Calu3 (cell line): ENCODE measurements at regions of chr6 and their contacts with region 1.

Region 1: DNA sequence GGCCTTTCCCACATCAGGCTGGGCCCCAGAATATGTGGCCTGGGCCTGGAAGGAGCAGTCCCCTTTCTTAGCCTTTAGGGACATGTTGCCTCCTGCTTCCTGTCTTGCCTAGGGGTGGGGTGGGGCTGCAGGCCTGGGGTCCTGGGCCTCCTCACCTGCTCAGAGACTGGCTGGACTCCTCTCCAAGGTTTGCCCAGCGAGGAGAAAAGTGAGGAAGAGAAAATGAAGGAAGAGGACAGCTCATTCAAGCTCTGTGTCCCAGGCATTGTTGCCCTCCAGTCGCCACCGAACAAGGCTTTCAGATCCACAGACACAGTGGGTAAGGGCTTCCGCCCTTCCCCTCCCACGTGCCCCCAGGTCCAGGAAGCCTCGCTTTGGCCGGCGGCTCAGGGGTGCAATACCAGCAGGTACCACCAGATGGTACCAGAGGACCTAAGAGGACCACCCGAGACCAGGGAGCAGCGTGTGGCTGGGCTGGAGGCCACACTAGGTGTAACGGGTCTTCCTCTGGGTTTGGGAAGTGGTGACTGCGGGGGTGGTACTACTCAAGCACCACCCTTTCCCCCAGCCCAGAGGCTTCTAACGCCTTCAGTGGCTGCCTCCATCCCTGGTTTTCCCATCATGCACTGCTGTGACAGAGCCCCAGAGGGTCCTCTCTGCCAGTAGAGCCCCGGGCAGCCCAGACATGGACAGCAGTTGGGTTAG is 5.5 kb upstream of the BAK1 start:
- DNase-seq: peak; percentile 95
- H3K4me3 Mint-ChIP-seq: no peak overlapping the region
- H3K27ac Mint-ChIP-seq: no peak overlapping the region
- H3K4me1 Mint-ChIP-seq: peaks cover 24% of the 10 kb centered on the region
- H3K27me3 Mint-ChIP-seq: no peaks in the 10 kb centered on the region
- CTCF ChIP-seq: peak; percentile 99

Region 2: GRCh38 chr6:33607784-33608161 is 22.2 kb after region 1 on chr6:
- CTCF ChIA-PET with region 1: interaction called, 14 read pairs
- intact Hi-C with region 1: no loop called
- DNase-seq: peak; percentile 71
- H3K4me3 Mint-ChIP-seq: no peak overlapping the region
- H3K27ac Mint-ChIP-seq: no peak overlapping the region
- H3K4me1 Mint-ChIP-seq: peaks cover 56% of the 10 kb centered on the region
- H3K27me3 Mint-ChIP-seq: no peaks in the 10 kb centered on the region
- CTCF ChIP-seq: peak; percentile 67

Region 3: DNA sequence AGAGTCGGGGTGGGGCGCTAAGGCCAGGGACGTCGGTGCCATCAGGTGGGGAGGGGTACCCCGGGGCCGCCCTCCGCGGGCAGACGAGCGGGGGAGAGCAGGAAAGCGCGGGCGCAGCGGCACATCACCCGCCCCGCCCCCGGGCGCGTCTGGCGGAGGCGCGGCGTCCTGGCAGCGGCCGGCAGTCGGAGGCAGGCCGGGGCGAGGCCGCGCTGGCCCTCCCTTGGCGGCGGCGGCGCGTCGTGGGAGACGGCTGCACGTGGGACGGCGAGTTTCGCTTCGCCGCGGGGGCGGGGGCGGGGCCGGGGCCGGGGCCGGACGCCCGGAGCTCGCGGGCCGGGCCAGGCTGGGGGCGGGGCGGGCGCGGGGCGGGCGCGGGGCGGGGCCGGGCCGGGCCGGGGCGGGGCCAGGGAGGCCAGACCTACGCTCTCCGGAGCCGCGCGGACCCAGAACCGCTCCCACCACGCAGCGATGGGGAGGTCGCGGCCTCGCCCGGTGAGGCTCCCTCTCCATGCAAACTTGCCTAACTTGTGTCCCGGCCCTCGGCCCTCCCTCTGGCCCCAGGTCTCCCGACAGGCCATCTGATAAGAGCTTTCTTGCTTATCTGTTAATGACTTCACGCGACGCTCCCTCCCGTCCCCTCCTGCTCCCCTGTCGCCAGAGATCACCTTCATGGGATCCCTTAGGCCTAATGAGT is 48.1 kb after region 1 on chr6:
- CTCF ChIA-PET with region 1: interaction called, 13 read pairs
- intact Hi-C with region 1: loop called (anchors 5 kb)
- DNase-seq: peak; percentile 74
- H3K4me3 Mint-ChIP-seq: peak overlapping the region; percentile 81
- H3K27ac Mint-ChIP-seq: peak overlapping the region; percentile 61
- H3K4me1 Mint-ChIP-seq: peaks cover 77% of the 10 kb centered on the region
- H3K27me3 Mint-ChIP-seq: no peaks in the 10 kb centered on the region
- CTCF ChIP-seq: no peak

Region 4: DNA sequence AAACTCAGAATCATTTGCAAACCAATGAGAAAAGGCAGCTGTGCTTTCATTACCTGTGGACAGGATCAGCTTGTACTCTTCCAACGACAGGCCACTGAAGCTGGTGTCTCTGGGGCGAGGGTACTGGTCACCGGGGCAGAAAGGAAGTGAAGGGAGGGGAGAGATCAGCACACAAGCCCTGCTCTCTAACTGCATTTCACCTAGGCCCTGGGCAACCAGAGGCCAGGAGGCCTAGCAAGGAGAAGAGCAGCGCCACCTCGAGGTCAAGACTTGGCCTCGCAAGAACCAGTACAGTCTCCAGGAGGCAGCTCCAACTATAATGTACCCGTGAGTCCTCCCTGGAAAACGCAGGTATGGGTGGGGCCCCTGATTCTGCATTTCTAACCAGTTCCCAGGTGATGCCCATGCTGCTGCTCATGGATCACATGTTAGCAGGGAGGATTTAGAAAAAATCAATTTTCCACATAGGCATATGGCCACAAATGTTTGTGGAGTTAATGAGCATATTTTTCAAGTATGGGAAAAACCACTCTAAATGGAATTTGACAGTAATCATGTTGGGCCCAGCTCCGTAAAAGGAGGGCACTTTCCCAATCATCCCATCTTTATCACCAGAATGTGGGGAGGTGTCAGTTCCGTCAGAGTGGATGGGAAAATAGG is 115.0 kb after region 1 on chr6:
- CTCF ChIA-PET with region 1: interaction called, 5 read pairs
- intact Hi-C with region 1: loop called (anchors 1 kb)
- DNase-seq: peak; percentile 85
- H3K4me3 Mint-ChIP-seq: no peak overlapping the region
- H3K27ac Mint-ChIP-seq: no peak overlapping the region
- H3K4me1 Mint-ChIP-seq: peaks cover 9% of the 10 kb centered on the region
- H3K27me3 Mint-ChIP-seq: no peaks in the 10 kb centered on the region
- CTCF ChIP-seq: peak; percentile 88

Region 5: GRCh38 chr6:33717934-33718455 is 132.4 kb after region 1 on chr6:
- CTCF ChIA-PET with region 1: no interaction called
- intact Hi-C with region 1: no loop called
- DNase-seq: no peak
- H3K4me3 Mint-ChIP-seq: no peak overlapping the region
- H3K27ac Mint-ChIP-seq: no peak overlapping the region
- H3K4me1 Mint-ChIP-seq: peaks cover 47% of the 10 kb centered on the region
- H3K27me3 Mint-ChIP-seq: peaks cover 11% of the 10 kb centered on the region
- CTCF ChIP-seq: no peak

Region 6: GRCh38 chr6:33771146-33772081 is 185.9 kb after region 1 on chr6:
- CTCF ChIA-PET with region 1: no interaction called
- intact Hi-C with region 1: loop called (anchors 5 kb)
- DNase-seq: peak; percentile 69
- H3K4me3 Mint-ChIP-seq: no peak overlapping the region
- H3K27ac Mint-ChIP-seq: peak overlapping the region; percentile 23
- H3K4me1 Mint-ChIP-seq: peaks cover 6% of the 10 kb centered on the region
- H3K27me3 Mint-ChIP-seq: peaks cover 24% of the 10 kb centered on the region
- CTCF ChIP-seq: peak; percentile 94